Posterior vena cava (tissue), 2 donors: ENCODE measurements at regions of chr3 and their contacts with region 1.

Region 1: DNA sequence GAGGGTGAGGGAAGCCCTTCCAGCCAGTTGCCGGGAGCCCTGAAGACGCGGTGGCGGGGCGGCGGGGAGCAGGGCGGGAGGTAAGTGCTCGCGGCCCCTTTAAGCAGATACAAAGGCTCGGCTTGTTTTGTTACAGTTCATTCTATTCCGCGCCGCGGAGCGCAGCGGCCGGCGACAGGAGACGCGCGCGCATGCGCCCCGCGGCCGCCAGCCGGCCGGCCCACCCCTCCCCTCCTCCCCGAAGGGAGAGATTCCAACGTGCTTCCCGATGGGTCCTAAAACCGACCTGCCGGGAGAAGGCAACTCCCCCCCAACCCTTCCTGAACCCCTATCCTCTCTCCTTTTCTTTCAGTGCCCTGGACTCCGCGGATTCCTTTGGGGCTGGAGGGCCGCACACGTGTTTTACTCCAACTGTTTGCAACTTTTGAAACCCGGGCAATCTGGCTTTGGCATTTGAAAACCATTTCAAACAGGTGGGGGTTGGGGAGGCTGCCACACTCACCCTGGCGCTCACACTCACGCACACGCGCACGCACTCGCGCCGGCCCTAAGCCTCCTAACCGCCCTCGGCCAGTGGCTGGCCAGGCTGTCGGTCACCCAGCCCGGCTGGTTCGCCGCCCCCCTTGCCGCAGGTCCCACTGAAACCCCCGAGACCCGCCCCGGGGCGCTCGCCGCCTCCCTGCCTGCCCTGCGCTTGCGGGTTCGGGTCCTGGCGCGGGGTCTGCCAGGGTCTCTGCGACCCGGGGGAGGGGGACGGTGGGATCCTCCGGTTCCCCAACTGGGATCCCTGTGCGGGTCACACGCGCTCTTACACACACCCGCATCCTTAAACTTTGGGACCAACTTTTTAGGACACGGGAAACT is at the start of gene MAGI1:
- DNase-seq: peak; percentile 95
- total RNA-seq, gene MAGI1: 27.9 to 31.5 TPM

Region 2: GRCh38 chr3:66115858-66116654 is 77.1 kb after region 1 on chr3:
- intact Hi-C with region 1: loop called in 1 of 2 experiments (anchors 5 kb)
- DNase-seq: peak; percentile 82